Activated naive CD4-positive, alpha-beta T cell treated with anti-CD3 and anti-CD28 coated beads, Interleukin-2, amount 10 ng/mL, durations not matched to agents 7 days and 5 days (primary cell): ENCODE measurements at regions of chr16 and their contacts with region 1.

Region 1: GRCh38 chr16:50326949-50327402 is 41.8 kb downstream of the BRD7 start:
- DNase-seq: peak; percentile 85
- H3K4me3 Mint-ChIP-seq: no peak overlapping the region
- H3K27ac Mint-ChIP-seq: peak overlapping the region; percentile 90
- H3K4me1 Mint-ChIP-seq: peaks cover 67% of the 10 kb centered on the region
- H3K27me3 Mint-ChIP-seq: no peaks in the 10 kb centered on the region

Region 2: DNA sequence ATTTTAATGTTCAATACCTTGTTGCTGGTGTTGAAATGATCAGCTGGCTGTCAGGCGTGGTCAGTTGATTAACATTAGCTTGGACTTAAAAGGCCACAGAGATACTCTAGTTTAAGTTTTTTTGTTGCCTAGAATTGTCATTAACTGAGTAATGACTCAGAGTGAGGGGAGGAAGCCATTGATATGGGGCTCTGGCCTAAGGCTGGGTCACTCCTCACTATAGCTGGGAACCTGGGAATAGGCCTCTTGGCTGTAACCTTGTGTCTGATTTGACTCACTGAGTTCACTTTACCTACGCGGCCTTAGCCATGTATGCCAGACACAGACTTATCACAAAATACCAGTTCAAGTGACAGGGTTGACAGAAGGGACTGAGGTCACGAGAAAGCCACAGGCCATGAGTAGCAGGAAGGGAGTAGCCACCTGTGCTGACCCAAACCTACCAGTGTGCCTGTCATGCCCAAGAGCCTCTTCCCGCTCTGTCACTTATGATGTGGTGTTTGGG is 98.6 kb before region 1 on chr16:
- CTCF ChIA-PET with region 1: no interaction called
- DNase-seq: no peak
- H3K4me3 Mint-ChIP-seq: no peak overlapping the region
- H3K27ac Mint-ChIP-seq: no peak overlapping the region
- H3K4me1 Mint-ChIP-seq: peaks cover 7% of the 10 kb centered on the region
- H3K27me3 Mint-ChIP-seq: no peaks in the 10 kb centered on the region

Region 3: DNA sequence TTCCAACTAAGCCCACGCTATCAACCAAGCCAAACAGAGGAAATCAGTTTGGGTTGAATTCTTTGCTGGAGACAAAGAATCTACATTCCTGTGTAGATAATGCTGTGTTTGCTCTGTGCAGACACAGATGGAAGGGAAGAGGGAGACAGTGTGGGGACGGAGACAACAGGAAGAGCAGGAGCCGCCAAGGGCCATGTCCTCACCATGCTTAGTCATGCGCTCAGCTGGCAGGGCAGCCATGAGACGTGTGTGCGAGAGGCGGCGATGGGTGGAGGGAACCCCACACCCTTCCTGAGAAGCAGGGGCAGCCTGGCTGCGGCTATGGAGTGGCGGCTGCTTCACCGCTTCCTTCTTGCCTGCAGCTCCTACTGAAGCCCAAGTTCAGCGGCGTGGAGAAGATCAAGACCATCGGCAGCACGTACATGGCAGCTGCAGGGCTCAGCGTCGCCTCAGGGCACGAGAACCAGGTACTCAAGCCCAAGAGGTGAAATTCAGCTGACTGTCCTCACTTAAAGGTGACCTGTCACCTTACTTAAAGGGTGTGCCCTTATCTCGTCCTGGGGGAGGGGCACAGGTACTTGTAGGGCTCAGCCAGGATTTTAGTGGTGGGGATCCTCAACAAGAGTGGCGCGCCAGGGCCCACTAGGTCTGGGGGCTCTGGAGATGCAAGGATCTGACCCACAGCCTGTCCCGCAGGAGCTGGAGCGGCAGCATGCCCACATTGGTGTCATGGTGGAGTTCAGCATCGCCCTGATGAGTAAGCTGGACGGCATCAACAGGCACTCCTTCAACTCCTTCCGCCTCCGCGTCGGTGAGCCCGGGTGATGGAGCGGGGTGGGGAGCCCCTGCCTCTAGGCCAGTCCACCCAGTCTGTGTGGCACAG is 13.1 kb before region 1 on chr16:
- CTCF ChIA-PET with region 1: interaction called, 29 read pairs
- DNase-seq: peak; percentile 81
- H3K4me3 Mint-ChIP-seq: peak overlapping the region; percentile 50
- H3K27ac Mint-ChIP-seq: peak overlapping the region; percentile 95
- H3K4me1 Mint-ChIP-seq: peaks cover 55% of the 10 kb centered on the region
- H3K27me3 Mint-ChIP-seq: no peaks in the 10 kb centered on the region

Region 4: GRCh38 chr16:50354629-50355456 is 27.9 kb after region 1 on chr16:
- CTCF ChIA-PET with region 1: interaction called, 156 read pairs
- DNase-seq: no peak
- H3K4me3 Mint-ChIP-seq: no peak overlapping the region
- H3K27ac Mint-ChIP-seq: peak overlapping the region; percentile 60
- H3K4me1 Mint-ChIP-seq: peaks cover 22% of the 10 kb centered on the region
- H3K27me3 Mint-ChIP-seq: no peaks in the 10 kb centered on the region

Region 5: GRCh38 chr16:50368410-50369132 is 41.6 kb after region 1 on chr16 and contains the start of gene BRD7:
- CTCF ChIA-PET with region 1: interaction called, 12 read pairs
- DNase-seq: peak; percentile 66
- H3K4me3 Mint-ChIP-seq: peak within 1 kb of the TSS; percentile 84
- H3K27ac Mint-ChIP-seq: peak within 1 kb of the TSS; percentile 85
- H3K4me1 Mint-ChIP-seq: peaks cover 47% of the 10 kb centered on the region
- H3K27me3 Mint-ChIP-seq: peaks cover 14% of the 10 kb centered on the region

Region 6: GRCh38 chr16:50747207-50747956 is 420.4 kb after region 1 on chr16:
- CTCF ChIA-PET with region 1: interaction called, 10 read pairs
- DNase-seq: peak; percentile 34
- H3K4me3 Mint-ChIP-seq: peak overlapping the region; percentile 81
- H3K27ac Mint-ChIP-seq: peak overlapping the region; percentile 92
- H3K4me1 Mint-ChIP-seq: peaks cover 60% of the 10 kb centered on the region
- H3K27me3 Mint-ChIP-seq: no peaks in the 10 kb centered on the region